ENCODE measurements at regions of chr11 and their contacts with region 1.

Region 1: GRCh38 chr11:19071255-19071654 is 10.7 kb upstream of the MRGPRX2 start:
- DNase-seq: peak; percentile 57 to 59
- ATAC-seq: peak; percentile 76 to 95 (median 88)
- H3K4me3 ChIP-seq: peak overlapping the region in 3 of 10 donors; percentile 13 to 29 (median 22)
- H3K27ac ChIP-seq: no peak overlapping the region
- H3K4me1 ChIP-seq: peaks cover 0 to 3% (median 0%) of the 10 kb centered on the region in 9 donors
- H3K27me3 ChIP-seq: peaks cover 0 to 17% (median 0%) of the 10 kb centered on the region in 7 donors
- CTCF ChIP-seq: peak; percentile 74 to 96 (median 90)

Region 2: DNA sequence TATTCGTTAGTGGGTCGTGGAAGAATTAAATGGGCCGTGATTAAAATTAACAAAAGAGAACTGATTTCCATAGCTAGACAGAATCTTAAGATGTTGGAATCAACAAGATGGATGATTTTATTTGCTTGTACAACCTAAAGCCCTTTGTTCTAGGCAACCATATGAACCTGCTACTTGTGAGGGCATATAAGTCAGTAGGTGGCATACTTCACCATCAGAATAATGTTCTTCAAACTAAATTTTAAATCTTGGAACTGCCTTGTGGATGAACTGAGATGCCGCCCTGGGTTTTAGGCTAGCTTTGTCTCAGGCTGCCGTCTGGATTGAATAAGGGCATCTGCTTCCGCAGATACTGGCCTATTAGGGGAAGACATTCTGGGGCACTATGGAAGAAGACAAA is 89.6 kb after region 1 on chr11:
- intact Hi-C with region 1: loop called in 2 of 10 experiments (anchors 10 kb)
- DNase-seq: no peak
- ATAC-seq: no peak
- H3K4me3 ChIP-seq: no peak overlapping the region
- H3K27ac ChIP-seq: no peak overlapping the region
- H3K4me1 ChIP-seq: no peaks in the 10 kb centered on the region
- H3K27me3 ChIP-seq: no peaks in the 10 kb centered on the region
- CTCF ChIP-seq: peak in 4 of 9 donors; percentile 24 to 44 (median 36)

Region 3: DNA sequence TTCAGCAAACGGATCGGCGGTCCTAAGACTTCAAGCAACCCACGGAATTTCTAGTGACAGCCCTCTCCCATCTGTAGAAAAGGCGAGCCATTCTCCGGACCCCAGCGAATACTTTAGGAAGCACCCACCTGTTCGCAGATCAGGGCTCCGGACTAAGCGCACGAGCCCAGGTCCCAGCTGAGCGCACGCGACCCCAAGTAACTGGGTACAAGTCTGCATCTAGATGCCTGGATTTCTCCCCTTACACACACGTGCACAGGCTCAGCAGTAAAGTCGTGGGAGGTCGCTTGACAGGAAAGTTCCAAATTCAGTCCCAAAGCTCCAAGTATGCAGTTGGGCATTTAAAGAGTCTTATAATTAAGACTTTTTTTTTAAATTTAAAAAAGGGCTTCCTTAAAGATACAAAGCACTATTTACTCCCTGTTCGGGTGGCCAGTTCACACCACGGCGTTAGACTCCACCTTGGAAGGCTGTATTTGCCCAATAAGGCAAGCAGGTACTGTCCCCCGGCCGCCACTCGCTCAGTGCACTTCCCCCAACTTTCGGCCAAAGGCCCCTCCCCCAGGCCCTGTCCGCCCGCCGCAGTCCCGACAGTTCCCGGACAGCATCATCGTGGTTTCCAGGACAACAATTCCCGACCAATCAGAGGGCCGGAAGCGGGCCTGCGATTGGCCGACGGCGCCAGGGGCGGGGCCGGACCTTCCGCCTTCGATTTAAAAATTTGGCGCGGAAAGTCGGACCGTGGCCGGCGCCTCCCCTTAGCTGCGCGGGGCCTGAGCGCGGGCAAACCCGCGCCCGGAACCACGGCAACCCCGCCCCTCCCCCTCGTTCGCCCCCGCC is 169.4 kb after region 1 on chr11 and contains the start of gene E2F8:
- intact Hi-C with region 1: loop called in 1 of 10 experiments (anchors 10 kb)
- DNase-seq: peak; percentile 92 to 96
- ATAC-seq: peak; percentile 93 to 98 (median 96)
- H3K4me3 ChIP-seq: peak within 1 kb of the TSS; percentile 46 to 74 (median 68)
- H3K27ac ChIP-seq: peak within 1 kb of the TSS in 7 of 10 donors; percentile 29 to 68 (median 56)
- H3K4me1 ChIP-seq: peaks cover 5 to 49% (median 17%) of the 10 kb centered on the region in 9 donors
- H3K27me3 ChIP-seq: peaks cover 11 to 52% (median 32%) of the 10 kb centered on the region in 7 donors
- CTCF ChIP-seq: no peak
- total RNA-seq, gene E2F8: 0.86 to 5.0 (median 3.7) TPM

Region 4: GRCh38 chr11:19259487-19260345 is 188.5 kb after region 1 on chr11:
- intact Hi-C with region 1: loop called in 1 of 10 experiments (anchors 5 kb)
- DNase-seq: peak; percentile 57 to 70
- ATAC-seq: peak in 7 of 8 donors; percentile 38 to 76 (median 71)
- H3K4me3 ChIP-seq: peak overlapping the region in 4 of 10 donors; percentile 10 to 34 (median 22)
- H3K27ac ChIP-seq: no peak overlapping the region
- H3K4me1 ChIP-seq: peaks cover 0 to 3% (median 0%) of the 10 kb centered on the region in 9 donors
- H3K27me3 ChIP-seq: no peaks in the 10 kb centered on the region
- CTCF ChIP-seq: peak; percentile 82 to 98 (median 94)

Region 5: GRCh38 chr11:19311308-19312030 is 240.2 kb after region 1 on chr11:
- intact Hi-C with region 1: loop called in 1 of 10 experiments (anchors 10 kb)
- DNase-seq: peak; percentile 53 to 71
- ATAC-seq: peak; percentile 83 to 91 (median 86)
- H3K4me3 ChIP-seq: no peak overlapping the region
- H3K27ac ChIP-seq: no peak overlapping the region
- H3K4me1 ChIP-seq: peaks cover 0 to 5% (median 0%) of the 10 kb centered on the region in 9 donors
- H3K27me3 ChIP-seq: peaks cover 0 to 8% (median 0%) of the 10 kb centered on the region in 7 donors
- CTCF ChIP-seq: peak; percentile 60 to 89 (median 83)

Measured in heart right ventricle (tissue), 16 donors.